Naive thymus-derived CD8-positive, alpha-beta T cell (primary cell): ENCODE measurements at regions of chr13 and their contacts with region 1.

Region 1: GRCh38 chr13:52450012-52450792 is at the start of gene VPS36:
- DNase-seq: peak; percentile 84 to 97 (median 95)
- ATAC-seq: peak; percentile 65 to 68
- H3K4me3 Mint-ChIP-seq: peak within 1 kb of the TSS; percentile 85 to 97 (median 92)
- H3K27ac Mint-ChIP-seq: peak within 1 kb of the TSS; percentile 81 to 96 (median 90)
- H3K4me1 Mint-ChIP-seq: peaks cover 22 to 52% (median 47%) of the 10 kb centered on the region in 4 donors
- H3K27me3 Mint-ChIP-seq: no peaks in the 10 kb centered on the region
- polyA plus RNA-seq, gene VPS36: 33.2 to 38.2 (median 36.6) TPM

Region 2: DNA sequence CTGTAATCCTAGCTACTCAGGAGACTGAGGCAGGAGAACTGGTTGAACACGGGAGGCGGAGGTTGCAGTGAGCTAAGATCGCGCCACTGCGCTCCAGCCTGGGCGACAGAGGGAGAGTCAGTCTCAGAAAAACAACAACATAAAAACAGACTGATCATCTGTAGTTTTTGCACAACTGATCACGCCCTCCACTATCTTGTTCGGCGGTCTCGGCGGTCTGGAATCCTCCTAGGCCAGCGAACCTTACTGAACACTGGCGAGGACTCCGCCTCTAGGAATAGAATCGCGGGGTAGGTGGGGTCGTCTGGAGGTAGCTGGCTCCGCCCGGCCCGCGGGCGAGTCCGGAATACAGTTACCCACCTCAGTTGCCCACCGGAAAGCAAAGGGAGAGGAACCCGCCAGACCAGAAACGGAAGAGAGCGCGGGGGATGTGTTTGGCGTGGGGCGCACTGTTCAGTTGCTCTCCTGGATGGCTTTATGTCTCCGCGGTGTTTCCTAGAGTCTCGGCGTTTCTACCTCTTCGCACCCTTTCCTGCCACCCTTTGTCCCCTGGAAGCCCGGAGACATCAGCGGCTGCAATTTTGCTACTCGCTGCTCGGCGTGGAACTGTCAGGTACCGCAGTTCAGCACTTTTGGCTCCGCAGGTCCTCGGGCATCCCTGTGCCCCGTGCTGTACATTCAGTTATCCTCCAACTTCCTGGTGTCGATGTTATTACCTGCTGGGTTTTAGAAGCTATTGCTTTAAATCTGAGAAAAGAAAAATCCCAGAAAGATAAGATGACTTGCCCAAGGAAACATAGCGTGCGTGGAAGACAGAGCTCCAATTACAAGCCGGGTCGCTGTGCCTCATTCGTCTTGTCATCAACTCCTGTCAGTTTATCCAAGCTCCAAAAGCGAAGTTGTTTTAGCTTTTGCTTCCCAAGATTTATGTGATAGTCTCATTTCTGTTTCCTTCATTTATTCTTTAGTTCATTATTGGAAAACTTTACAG is 167.2 kb after region 1 on chr13:
- POLR2A ChIA-PET with region 1: interaction called, 11 read pairs
- DNase-seq: peak; percentile 61 to 89 (median 84)
- ATAC-seq: peak; percentile 95 to 96
- H3K4me3 Mint-ChIP-seq: peak overlapping the region; percentile 96 to 100 (median 99)
- H3K27ac Mint-ChIP-seq: peak overlapping the region; percentile 95 to 98 (median 97)
- H3K4me1 Mint-ChIP-seq: peaks cover 14 to 48% (median 39%) of the 10 kb centered on the region in 4 donors
- H3K27me3 Mint-ChIP-seq: no peaks in the 10 kb centered on the region

Region 3: GRCh38 chr13:52652196-52652979 is 202.2 kb after region 1 on chr13 and contains the start of gene SUGT1:
- POLR2A ChIA-PET with region 1: interaction called, 17 read pairs
- DNase-seq: peak; percentile 91 to 98 (median 95)
- ATAC-seq: peak; percentile 93 to 94
- H3K4me3 Mint-ChIP-seq: no peak within 1 kb of the TSS
- H3K27ac Mint-ChIP-seq: no peak within 1 kb of the TSS
- H3K4me1 Mint-ChIP-seq: peaks cover 3 to 11% (median 6%) of the 10 kb centered on the region in 4 donors
- H3K27me3 Mint-ChIP-seq: no peaks in the 10 kb centered on the region
- polyA plus RNA-seq, gene SUGT1: 50.4 to 53.1 (median 51.3) TPM